Prostate gland (tissue), 2 donors: ENCODE measurements at regions of chr1 and their contacts with region 1.

Region 1: GRCh38 chr1:58739856-58740466 is 40.1 kb upstream of the MYSM1 start:
- DNase-seq: peak; percentile 55
- H3K4me3 ChIP-seq: no peak overlapping the region
- H3K27ac ChIP-seq: no peak overlapping the region
- H3K4me1 ChIP-seq: no peaks in the 10 kb centered on the region
- H3K27me3 ChIP-seq: no peaks in the 10 kb centered on the region
- CTCF ChIP-seq: peak; percentile 73 to 94 (median 89)
- POLR2A ChIP-seq: no peak

Region 2: GRCh38 chr1:58768971-58769808 is 29.2 kb after region 1 on chr1:
- intact Hi-C with region 1: loop called (anchors 2 kb)
- DNase-seq: peak; percentile 72
- H3K4me3 ChIP-seq: no peak overlapping the region
- H3K27ac ChIP-seq: no peak overlapping the region
- H3K4me1 ChIP-seq: peaks cover 6% of the 10 kb centered on the region
- H3K27me3 ChIP-seq: no peaks in the 10 kb centered on the region
- CTCF ChIP-seq: peak; percentile 67 to 91 (median 74)
- POLR2A ChIP-seq: no peak

Region 3: GRCh38 chr1:59707178-59707791 is 967.3 kb after region 1 on chr1:
- intact Hi-C with region 1: loop called (anchors 5 kb)
- DNase-seq: no peak
- H3K4me3 ChIP-seq: no peak overlapping the region
- H3K27ac ChIP-seq: peak overlapping the region; percentile 22 to 44
- H3K4me1 ChIP-seq: no peaks in the 10 kb centered on the region
- H3K27me3 ChIP-seq: no peaks in the 10 kb centered on the region
- CTCF ChIP-seq: no peak
- POLR2A ChIP-seq: no peak

Region 4: GRCh38 chr1:59718064-59718988 is 978.4 kb after region 1 on chr1:
- intact Hi-C with region 1: loop called (anchors 5 kb)
- DNase-seq: no peak
- H3K4me3 ChIP-seq: no peak overlapping the region
- H3K27ac ChIP-seq: peak overlapping the region in 1 of 2 donors; percentile 57
- H3K4me1 ChIP-seq: no peaks in the 10 kb centered on the region
- H3K27me3 ChIP-seq: no peaks in the 10 kb centered on the region
- CTCF ChIP-seq: peak in 2 of 4 experiments; percentile 23 to 33
- POLR2A ChIP-seq: no peak

Region 5: GRCh38 chr1:59759156-59759925 is 1019.4 kb after region 1 on chr1:
- intact Hi-C with region 1: loop called (anchors 2 kb)
- DNase-seq: peak; percentile 75
- H3K4me3 ChIP-seq: no peak overlapping the region
- H3K27ac ChIP-seq: peak overlapping the region; percentile 48 to 49
- H3K4me1 ChIP-seq: no peaks in the 10 kb centered on the region
- H3K27me3 ChIP-seq: no peaks in the 10 kb centered on the region
- CTCF ChIP-seq: peak; percentile 56 to 97 (median 94)
- POLR2A ChIP-seq: no peak